Thyroid gland (tissue), 4 donors: ENCODE measurements at regions of chr10 and their contacts with region 1.

Region 1: GRCh38 chr10:14093730-14094484 is 236.8 kb downstream of the FRMD4A start:
- DNase-seq: no peak
- H3K4me3 ChIP-seq: no peak overlapping the region
- H3K27ac ChIP-seq: peak overlapping the region in 2 of 3 donors; percentile 43 to 61
- H3K4me1 ChIP-seq: peaks cover 9 to 18% of the 10 kb centered on the region in 2 donors
- H3K27me3 ChIP-seq: no peaks in the 10 kb centered on the region
- CTCF ChIP-seq: peak in 4 of 6 experiments; percentile 55 to 65 (median 60)
- POLR2A ChIP-seq: no peak

Region 2: GRCh38 chr10:13659897-13660550 is 433.9 kb before region 1 on chr10:
- intact Hi-C with region 1: loop called (anchors 10 kb)
- DNase-seq: peak; percentile 50 to 72
- H3K4me3 ChIP-seq: no peak overlapping the region
- H3K27ac ChIP-seq: peak overlapping the region in 1 of 3 donors; percentile 7
- H3K4me1 ChIP-seq: no peaks in the 10 kb centered on the region
- H3K27me3 ChIP-seq: no peaks in the 10 kb centered on the region
- CTCF ChIP-seq: peak; percentile 72 to 92 (median 87)
- POLR2A ChIP-seq: no peak

Region 3: DNA sequence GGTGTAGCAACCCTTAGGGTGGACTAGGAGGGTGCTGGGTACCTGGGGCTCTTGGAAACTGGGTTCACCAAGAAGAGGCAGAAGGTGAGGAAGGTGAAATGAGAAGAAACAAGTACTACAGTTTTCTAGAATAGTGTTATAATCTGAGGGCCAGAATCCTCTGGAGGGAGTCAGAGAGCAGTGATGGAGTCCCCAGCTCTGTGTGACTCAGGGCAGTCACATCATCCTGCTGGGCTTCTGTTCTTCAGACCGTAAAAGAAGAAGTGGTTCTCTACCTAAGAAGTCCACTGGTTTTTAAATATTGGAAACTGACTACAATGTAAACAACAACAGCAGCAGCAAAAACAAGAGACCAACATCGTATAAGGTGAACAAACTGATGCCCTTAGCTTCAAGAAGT is 309.8 kb before region 1 on chr10:
- intact Hi-C with region 1: loop called (anchors 5 kb)
- DNase-seq: peak; percentile 17 to 29
- H3K4me3 ChIP-seq: no peak overlapping the region
- H3K27ac ChIP-seq: no peak overlapping the region
- H3K4me1 ChIP-seq: peaks cover 20 to 28% of the 10 kb centered on the region in 2 donors
- H3K27me3 ChIP-seq: no peaks in the 10 kb centered on the region
- CTCF ChIP-seq: peak in 2 of 6 experiments; percentile 23 to 24
- POLR2A ChIP-seq: no peak